ENCODE measurements at regions of chr7 and their contacts with region 1.

Region 1: DNA sequence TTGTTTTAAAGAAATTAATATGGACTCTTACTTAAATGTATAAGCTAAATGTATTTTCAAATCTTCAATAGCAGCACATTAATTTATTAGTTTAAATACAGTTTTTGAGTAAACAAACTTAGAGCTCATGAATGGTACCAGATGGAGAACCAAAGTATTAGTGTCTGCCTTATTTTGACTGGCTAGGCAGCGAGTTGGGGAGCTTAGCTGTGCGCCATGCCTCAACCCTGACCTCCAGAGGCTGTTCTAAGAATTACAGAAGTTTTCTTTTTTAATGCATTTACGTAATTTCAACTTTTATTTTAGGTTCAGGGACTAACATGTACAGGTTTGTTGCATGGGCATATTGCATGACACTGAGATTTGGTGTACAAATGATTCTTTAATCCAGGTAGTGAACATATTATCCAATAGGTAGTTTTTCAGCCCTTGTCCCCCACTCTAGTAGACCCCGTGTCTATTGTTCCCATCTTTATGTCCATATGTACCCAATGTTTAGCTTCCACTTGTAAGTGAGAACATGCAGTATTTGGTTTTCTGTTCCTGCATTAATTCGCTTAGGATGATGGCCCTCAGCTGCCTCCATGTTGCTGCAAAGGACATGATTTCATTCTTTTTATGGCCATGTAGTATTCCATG is 166.8 kb downstream of the IQUB start:
- DNase-seq: peak; percentile 27
- ATAC-seq: peak; percentile 47
- H3K4me3 Mint-ChIP-seq: no peak overlapping the region
- H3K27ac Mint-ChIP-seq: no peak overlapping the region
- H3K4me1 Mint-ChIP-seq: no peaks in the 10 kb centered on the region
- H3K27me3 Mint-ChIP-seq: no peaks in the 10 kb centered on the region

Region 2: DNA sequence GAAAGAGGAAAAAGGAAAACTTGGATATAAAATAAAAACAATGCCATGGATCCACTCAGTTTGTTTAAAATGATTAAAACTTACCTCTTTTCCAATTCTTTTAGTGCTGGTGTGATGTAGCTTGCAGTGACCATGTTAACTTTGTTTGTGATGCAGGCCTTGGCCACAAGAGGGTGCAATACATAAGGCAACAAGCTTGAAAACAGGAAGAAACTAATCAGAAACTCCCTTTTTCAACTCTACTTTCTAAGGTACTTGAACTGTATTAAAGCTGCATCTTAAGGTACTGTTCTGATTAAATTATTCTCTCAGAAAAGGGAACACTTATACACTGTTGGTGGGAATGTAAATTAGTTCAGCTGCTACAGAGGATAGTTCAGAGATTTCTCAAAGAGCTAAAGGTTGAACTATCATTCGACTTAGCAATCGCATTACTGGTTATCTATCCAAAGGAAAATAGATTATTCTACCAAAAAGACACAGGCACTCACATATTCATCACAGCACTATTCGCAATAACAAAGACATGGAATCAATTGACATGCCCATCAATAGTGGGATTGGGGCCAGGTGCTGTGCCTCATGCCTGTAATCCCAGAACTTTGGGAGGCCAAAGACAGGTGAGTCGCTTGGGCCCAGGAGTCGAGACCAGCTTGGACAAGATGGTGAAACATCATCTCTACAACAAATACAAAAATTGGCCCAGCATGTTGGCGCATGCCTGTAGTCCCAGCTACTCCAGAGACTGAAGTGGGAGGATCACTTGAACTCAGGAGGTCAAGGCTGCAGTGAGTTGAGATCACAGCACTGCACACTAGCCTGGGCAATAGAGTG is 1274.4 kb before region 1 on chr7:
- CTCF ChIA-PET with region 1: no interaction called
- POLR2A ChIA-PET with region 1: no interaction called
- intact Hi-C with region 1: loop called in 1 of 2 experiments (anchors 5 kb)
- DNase-seq: peak; percentile 75
- ATAC-seq: no peak
- H3K4me3 Mint-ChIP-seq: no peak overlapping the region
- H3K27ac Mint-ChIP-seq: no peak overlapping the region
- H3K4me1 Mint-ChIP-seq: no peaks in the 10 kb centered on the region
- H3K27me3 Mint-ChIP-seq: no peaks in the 10 kb centered on the region

Region 3: DNA sequence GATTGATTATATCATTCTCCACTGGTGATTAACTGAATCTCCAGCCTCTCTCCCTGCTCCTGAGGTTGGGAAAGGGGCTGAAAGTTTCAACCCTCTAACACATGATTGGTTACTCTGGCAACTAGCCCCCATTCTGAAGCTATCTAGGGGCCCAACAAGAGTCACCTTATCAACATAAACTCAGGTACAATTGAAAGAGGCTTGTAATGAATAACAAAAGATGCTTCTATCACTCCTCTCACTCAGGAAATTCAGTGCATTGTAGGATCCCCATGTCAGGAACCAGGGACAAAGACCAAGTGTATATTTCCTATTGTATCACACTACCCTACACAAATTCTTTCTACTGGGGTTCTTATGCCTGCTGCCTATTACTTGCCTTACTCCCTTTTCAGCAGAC is 43.9 kb before region 1 on chr7:
- CTCF ChIA-PET with region 1: no interaction called
- POLR2A ChIA-PET with region 1: no interaction called
- intact Hi-C with region 1: no loop called
- DNase-seq: no peak
- ATAC-seq: no peak
- H3K4me3 Mint-ChIP-seq: no peak overlapping the region
- H3K27ac Mint-ChIP-seq: no peak overlapping the region
- H3K4me1 Mint-ChIP-seq: no peaks in the 10 kb centered on the region
- H3K27me3 Mint-ChIP-seq: no peaks in the 10 kb centered on the region

Region 4: GRCh38 chr7:123410273-123410904 is 42.8 kb after region 1 on chr7:
- CTCF ChIA-PET with region 1: no interaction called
- POLR2A ChIA-PET with region 1: no interaction called
- intact Hi-C with region 1: no loop called
- DNase-seq: no peak
- ATAC-seq: no peak
- H3K4me3 Mint-ChIP-seq: no peak overlapping the region
- H3K27ac Mint-ChIP-seq: no peak overlapping the region
- H3K4me1 Mint-ChIP-seq: no peaks in the 10 kb centered on the region
- H3K27me3 Mint-ChIP-seq: peaks cover 2% of the 10 kb centered on the region

Measured in activated CD4-positive, alpha-beta T cell treated with anti-CD3 and anti-CD28 coated beads for 36 hours (primary cell).